Caco-2 (cell line): ENCODE measurements at regions of chr6 and their contacts with region 1.

Region 1: DNA sequence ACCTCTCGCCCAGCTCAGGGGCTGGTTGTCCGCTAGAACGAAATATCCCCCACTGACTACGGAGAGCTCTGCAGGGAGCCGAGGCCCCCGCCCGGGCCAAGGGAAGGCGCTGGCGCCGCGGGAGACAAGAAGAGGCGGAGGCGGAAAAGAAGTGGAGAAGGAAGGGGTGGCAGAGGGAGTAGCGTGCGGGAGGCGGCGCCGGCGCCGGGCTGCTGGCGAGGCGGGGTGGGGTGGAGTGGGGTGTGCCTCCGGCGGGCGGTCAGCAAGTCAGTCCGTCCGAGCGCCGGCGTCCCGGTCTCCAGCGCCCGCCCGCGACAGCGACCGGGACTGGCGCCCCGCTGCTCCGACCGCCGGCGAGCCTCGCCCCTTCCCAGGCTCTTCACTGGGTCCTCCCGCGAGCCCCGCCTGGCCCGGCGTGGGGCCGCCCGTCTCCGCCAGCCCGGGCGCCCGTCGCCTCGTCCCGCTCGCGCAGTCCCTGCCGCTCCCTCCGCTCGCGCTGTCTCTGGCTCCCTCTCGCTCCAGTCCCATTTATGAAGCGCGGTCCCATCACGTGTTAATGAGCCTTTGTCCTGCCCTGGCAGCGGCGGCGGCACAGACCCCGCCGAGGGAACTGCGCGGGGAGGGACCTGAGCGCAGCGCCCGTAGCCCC is at the start of gene CNR1:
- DNase-seq: peak in 1 of 2 experiments; percentile 49
- H3K4me3 ChIP-seq: peak within 1 kb of the TSS; percentile 43
- H3K4me3 Mint-ChIP-seq: peak within 1 kb of the TSS; percentile 73
- H3K27ac Mint-ChIP-seq: no peak within 1 kb of the TSS
- H3K4me1 ChIP-seq: 0 out of 2 replicates have a peak, but pooled peaks cover 5% of the 10 kb centered on the region
- H3K4me1 Mint-ChIP-seq: peaks cover 6% of the 10 kb centered on the region
- H3K27me3 ChIP-seq: peaks cover 2% of the 10 kb centered on the region; the same call in 1 of the 2 replicates
- H3K27me3 Mint-ChIP-seq: peaks cover 34% of the 10 kb centered on the region
- CTCF ChIP-seq: no peak
- total RNA-seq, gene CNR1: not detected in 2 replicates

Region 2: GRCh38 chr6:87832025-87832825 is 333.7 kb before region 1 on chr6:
- CTCF ChIA-PET with region 1: no interaction called
- POLR2A ChIA-PET with region 1: no interaction called
- intact Hi-C with region 1: loop called (anchors 5 kb)
- DNase-seq: no peak
- H3K4me3 ChIP-seq: no peak overlapping the region
- H3K4me3 Mint-ChIP-seq: no peak overlapping the region
- H3K27ac Mint-ChIP-seq: no peak overlapping the region
- H3K4me1 ChIP-seq: no peaks in the 10 kb centered on the region
- H3K4me1 Mint-ChIP-seq: peaks cover 8% of the 10 kb centered on the region
- H3K27me3 ChIP-seq: no peaks in the 10 kb centered on the region
- H3K27me3 Mint-ChIP-seq: no peaks in the 10 kb centered on the region
- CTCF ChIP-seq: peak; percentile 18 to 28

Region 3: DNA sequence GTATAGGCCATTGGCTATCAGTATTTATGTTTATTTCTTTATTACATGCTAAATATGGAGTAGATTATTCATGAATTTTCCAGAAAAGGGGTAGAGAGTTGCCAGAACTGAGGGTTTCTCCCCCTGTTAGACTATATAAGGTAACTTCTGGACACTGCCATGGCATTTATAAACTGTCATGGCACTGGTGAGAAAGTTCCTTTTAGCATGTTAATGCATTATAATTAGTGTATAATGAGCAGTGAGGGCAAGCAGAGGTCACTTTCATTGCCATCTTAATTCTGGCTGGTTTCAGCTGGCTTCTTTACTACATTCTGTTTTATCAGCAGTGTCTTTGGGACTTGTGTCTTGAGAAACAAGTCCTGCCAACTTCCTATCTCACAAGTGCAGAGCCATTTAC is 220.2 kb after region 1 on chr6:
- CTCF ChIA-PET with region 1: no interaction called
- POLR2A ChIA-PET with region 1: no interaction called
- intact Hi-C with region 1: no loop called
- DNase-seq: no peak
- H3K4me3 ChIP-seq: no peak overlapping the region
- H3K4me3 Mint-ChIP-seq: no peak overlapping the region
- H3K27ac Mint-ChIP-seq: no peak overlapping the region
- H3K4me1 ChIP-seq: 0 out of 2 replicates have a peak, but pooled peaks cover 3% of the 10 kb centered on the region
- H3K4me1 Mint-ChIP-seq: no peaks in the 10 kb centered on the region
- H3K27me3 ChIP-seq: no peaks in the 10 kb centered on the region; the same call in 1 of the 2 replicates
- H3K27me3 Mint-ChIP-seq: peaks cover 7% of the 10 kb centered on the region
- CTCF ChIP-seq: no peak

Region 4: DNA sequence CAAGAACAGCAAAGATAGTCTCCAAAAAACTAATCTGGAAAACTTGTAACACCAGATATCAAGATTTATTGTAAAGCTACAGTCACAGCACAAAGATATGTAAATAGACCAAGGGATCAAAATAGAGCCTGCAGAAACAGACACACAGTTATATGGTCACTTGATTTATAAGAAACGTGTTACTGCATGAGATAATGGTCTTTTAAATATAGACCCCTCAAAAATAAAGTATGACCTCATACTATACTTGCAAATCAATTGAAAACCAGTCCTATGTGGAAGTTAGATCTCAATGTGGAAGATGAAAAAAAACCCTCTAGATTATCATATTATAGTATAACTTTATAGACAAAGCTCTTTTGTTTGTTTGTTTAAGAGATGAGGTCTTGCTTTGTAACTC is 247.5 kb after region 1 on chr6:
- CTCF ChIA-PET with region 1: no interaction called
- POLR2A ChIA-PET with region 1: interaction called, 10 read pairs
- intact Hi-C with region 1: no loop called
- DNase-seq: no peak
- H3K4me3 ChIP-seq: no peak overlapping the region
- H3K4me3 Mint-ChIP-seq: no peak overlapping the region
- H3K27ac Mint-ChIP-seq: no peak overlapping the region
- H3K4me1 ChIP-seq: no peaks in the 10 kb centered on the region
- H3K4me1 Mint-ChIP-seq: no peaks in the 10 kb centered on the region
- H3K27me3 ChIP-seq: no peaks in the 10 kb centered on the region
- H3K27me3 Mint-ChIP-seq: peaks cover 3% of the 10 kb centered on the region
- CTCF ChIP-seq: no peak